H1 (cell line): ENCODE measurements at regions of chr12 and their contacts with region 1.

Region 1: DNA sequence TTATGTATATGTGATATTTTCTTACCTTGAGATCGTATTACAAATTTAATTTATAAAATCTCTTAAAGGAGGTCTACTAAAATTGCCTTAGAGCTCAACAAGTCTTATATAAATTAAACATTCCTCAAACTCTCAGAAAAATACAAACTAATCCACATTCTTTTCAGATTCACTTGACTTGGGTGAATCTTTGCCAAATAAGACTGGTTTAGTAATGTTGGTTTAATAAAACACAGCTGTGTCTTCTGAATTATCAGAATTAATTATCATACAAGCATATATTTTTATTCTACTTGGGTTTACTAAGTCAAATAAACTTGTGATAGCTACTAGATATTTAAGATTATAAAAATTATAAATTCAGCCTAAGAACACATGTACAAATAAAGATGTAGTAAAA is 13.3 kb downstream of the GLIPR1L2 start:
- DNase-seq: no peak
- H3K4me3 ChIP-seq: no peak overlapping the region
- H3K27ac ChIP-seq: no peak overlapping the region
- H3K4me1 ChIP-seq: no peaks in the 10 kb centered on the region
- H3K27me3 ChIP-seq: no peaks in the 10 kb centered on the region
- CTCF ChIP-seq: no peak
- EP300 ChIP-seq: no peak
- POLR2A ChIP-seq: no peak
- RAD21 ChIP-seq: no peak

Region 2: GRCh38 chr12:75390899-75391538 is 13.2 kb before region 1 on chr12 and contains the start of gene GLIPR1L2:
- CTCF ChIA-PET with region 1: interaction called, 17 read pairs
- POLR2A ChIA-PET with region 1: no interaction called
- DNase-seq: peak; percentile 97 to 98
- H3K4me3 ChIP-seq: peak within 1 kb of the TSS; percentile 51 to 63 (median 58)
- H3K27ac ChIP-seq: peak within 1 kb of the TSS; percentile 33; the same call in 1 of the 2 replicates
- H3K4me1 ChIP-seq: peaks cover 0 to 3% (median 0%) of the 10 kb centered on the region in 4 experiments; a peak in 1 of 7 replicates
- H3K27me3 ChIP-seq: no peaks in the 10 kb centered on the region
- CTCF ChIP-seq: peak; percentile 75 to 94 (median 80)
- EP300 ChIP-seq: no peak
- POLR2A ChIP-seq: peak in 1 of 2 experiments; percentile 72; a peak in 2 of 3 replicates
- RAD21 ChIP-seq: peak; percentile 49 to 66; a peak in 3 of 4 replicates
- total RNA-seq, gene GLIPR1L2: not detected in 2 replicates

Region 3: GRCh38 chr12:75414671-75415070 is 10.4 kb after region 1 on chr12:
- CTCF ChIA-PET with region 1: interaction called, 12 read pairs
- POLR2A ChIA-PET with region 1: interaction called, 5 read pairs
- DNase-seq: no peak
- H3K4me3 ChIP-seq: no peak overlapping the region
- H3K27ac ChIP-seq: no peak overlapping the region
- H3K4me1 ChIP-seq: no peaks in the 10 kb centered on the region
- H3K27me3 ChIP-seq: no peaks in the 10 kb centered on the region
- CTCF ChIP-seq: no peak
- EP300 ChIP-seq: no peak
- POLR2A ChIP-seq: no peak
- RAD21 ChIP-seq: no peak